PC-3 (cell line): ENCODE measurements at regions of chr11 and their contacts with region 1.

Region 1: DNA sequence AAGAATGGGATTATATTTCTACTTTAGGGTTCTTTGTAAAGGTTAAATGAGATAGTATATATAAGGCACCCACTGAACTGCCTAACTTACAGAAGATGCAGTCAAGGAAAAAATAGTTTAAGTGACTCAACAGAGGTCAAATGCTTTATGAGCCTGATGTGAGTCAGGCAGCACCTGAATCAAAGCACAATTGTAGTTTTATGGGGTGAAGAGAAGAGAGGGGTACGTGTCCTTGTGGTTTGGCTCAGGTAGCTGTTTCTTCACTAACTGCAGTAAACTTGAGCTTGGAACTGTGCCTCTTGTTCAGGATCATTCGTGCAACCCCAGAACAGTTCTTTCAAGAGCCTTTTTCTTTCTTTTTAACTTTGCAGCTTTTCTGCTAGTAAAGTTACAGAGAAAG is 125.2 kb upstream of the SPON1 start:
- DNase-seq: peak; percentile 94
- ATAC-seq: peak; percentile 88
- H3K4me3 ChIP-seq: no peak overlapping the region
- H3K27ac ChIP-seq: peak overlapping the region; percentile 95
- H3K4me1 ChIP-seq: peaks cover 35% of the 10 kb centered on the region
- H3K27me3 ChIP-seq: no peaks in the 10 kb centered on the region
- CTCF ChIP-seq: no peak

Region 2: DNA sequence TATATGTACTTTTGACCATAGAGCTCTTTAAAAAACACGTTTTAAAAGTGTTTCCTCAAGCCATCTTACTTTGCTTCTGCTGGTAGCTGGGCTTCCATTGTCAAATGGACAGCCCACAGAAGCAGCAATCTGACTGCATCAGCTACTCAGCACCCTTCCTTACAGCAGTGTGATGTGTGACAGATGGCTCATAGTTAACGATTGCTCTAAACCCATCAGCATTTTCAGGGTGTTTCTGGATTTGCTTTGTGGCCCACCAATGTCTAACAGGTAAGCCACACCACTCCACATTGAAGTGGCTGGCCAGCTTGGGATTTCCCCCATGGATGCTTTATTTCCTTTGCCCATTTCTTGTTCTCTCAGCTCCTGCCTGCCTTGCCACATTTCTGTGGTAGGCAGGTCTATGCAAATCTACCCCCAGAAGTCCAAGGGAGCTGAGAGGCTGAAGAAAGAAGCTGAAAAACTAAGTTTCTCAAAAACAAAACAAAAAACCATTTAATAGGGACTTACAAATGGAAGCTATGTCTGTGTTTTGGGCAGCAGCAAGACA is 176.1 kb before region 1 on chr11:
- CTCF ChIA-PET with region 1: interaction called, 11 read pairs
- POLR2A ChIA-PET with region 1: no interaction called
- intact Hi-C with region 1: no loop called
- DNase-seq: no peak
- ATAC-seq: no peak
- H3K4me3 ChIP-seq: no peak overlapping the region
- H3K27ac ChIP-seq: no peak overlapping the region
- H3K4me1 ChIP-seq: peaks cover 12% of the 10 kb centered on the region
- H3K27me3 ChIP-seq: no peaks in the 10 kb centered on the region
- CTCF ChIP-seq: no peak

Region 3: DNA sequence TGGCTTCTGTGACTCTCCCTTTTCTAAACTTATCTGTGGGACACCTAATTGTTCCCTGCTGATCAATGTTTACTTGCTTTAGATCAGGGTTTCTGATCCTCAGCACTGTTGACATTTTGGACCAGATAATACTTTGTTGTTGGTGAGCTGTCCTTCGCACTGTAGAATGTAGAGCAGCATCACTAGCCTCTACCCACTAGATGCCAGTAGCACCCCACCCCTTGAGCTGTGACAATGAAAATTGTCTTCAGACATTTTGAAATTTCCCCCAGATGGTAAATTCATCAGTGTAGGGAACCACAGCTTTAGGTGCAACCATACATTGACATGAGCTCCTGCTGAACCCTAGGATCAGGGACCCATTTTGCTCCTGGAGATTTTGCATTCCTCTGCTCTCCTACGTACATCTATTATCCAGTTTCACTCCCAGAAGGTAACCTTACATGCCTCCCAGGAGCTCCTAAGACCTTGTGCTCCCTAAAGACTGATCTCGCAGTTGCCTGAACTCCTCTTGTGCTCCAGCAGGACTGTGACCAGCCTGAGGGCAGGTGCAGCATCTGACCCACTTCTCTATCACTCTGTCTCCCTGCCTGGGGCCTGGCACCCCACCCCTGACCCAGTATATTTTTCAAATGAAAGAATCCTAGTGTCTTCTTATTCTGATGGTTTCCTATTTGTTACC is 61.0 kb before region 1 on chr11:
- CTCF ChIA-PET with region 1: no interaction called
- POLR2A ChIA-PET with region 1: no interaction called
- intact Hi-C with region 1: no loop called
- DNase-seq: peak; percentile 64
- ATAC-seq: peak; percentile 86
- H3K4me3 ChIP-seq: no peak overlapping the region
- H3K27ac ChIP-seq: no peak overlapping the region
- H3K4me1 ChIP-seq: no peaks in the 10 kb centered on the region
- H3K27me3 ChIP-seq: no peaks in the 10 kb centered on the region
- CTCF ChIP-seq: peak; percentile 75

Region 4: GRCh38 chr11:13857828-13858227 is 20.5 kb after region 1 on chr11:
- CTCF ChIA-PET with region 1: no interaction called
- POLR2A ChIA-PET with region 1: interaction called, 7 read pairs
- intact Hi-C with region 1: loop called (anchors 2 kb)
- DNase-seq: peak; percentile 64
- ATAC-seq: peak; percentile 91
- H3K4me3 ChIP-seq: no peak overlapping the region
- H3K27ac ChIP-seq: peak overlapping the region; percentile 89
- H3K4me1 ChIP-seq: peaks cover 20% of the 10 kb centered on the region
- H3K27me3 ChIP-seq: no peaks in the 10 kb centered on the region
- CTCF ChIP-seq: no peak